Activated CD4-positive, alpha-beta T cell treated with anti-CD3 and anti-CD28 coated beads, Interleukin-2, amount 10 ng/mL, durations not matched to agents 24 days and 14 days (primary cell): ENCODE measurements at regions of chr14 and their contacts with region 1.

Region 1: DNA sequence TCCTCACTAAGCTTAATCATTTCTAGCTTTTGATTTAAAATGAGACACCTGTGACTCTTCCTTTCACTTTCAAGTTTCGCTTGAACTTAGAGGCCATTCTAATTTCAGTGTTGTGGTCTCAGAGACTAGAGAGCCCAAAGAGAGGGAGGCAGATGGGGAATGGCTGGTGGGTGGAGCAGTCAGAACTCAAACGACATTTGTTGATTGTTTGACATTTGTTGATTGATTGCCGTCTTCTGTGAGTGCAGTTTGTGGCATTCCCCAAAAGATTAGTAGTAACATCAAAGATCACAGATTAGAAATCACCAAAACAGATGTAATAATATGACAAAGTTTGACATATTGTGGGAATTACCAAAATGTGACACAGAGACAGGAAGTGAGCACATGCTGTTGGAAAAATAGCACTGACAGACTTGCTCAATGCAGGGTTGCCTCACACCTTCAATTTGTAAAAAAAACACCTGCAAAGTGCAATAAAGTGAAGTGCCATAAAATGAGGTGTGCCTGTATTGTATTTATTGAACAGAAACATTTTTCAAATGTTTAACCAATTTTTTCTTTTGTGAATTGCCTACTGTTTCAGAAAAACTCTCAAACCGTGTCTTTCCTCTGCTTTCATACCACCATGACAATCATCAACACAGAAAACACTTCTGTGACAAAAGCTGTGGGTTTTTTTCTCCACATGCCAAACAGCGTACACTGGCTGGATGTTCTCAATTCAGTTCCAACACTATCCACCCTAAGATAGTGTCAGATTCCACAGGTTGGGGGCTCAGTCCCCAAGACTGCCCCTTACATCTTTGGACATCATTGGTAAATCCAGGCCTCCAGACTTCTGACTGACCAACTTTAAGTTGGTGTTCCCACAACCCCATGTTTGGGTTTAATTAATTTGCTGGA is 376.3 kb upstream of the RGS6 start:
- DNase-seq: peak; percentile 91
- H3K4me3 Mint-ChIP-seq: peak overlapping the region; percentile 59
- H3K27ac Mint-ChIP-seq: peak overlapping the region; percentile 92
- H3K4me1 Mint-ChIP-seq: peaks cover 61% of the 10 kb centered on the region
- H3K27me3 Mint-ChIP-seq: no peaks in the 10 kb centered on the region

Region 2: GRCh38 chr14:71138448-71139293 is 417.2 kb before region 1 on chr14:
- intact Hi-C with region 1: loop called (anchors 1 kb)
- DNase-seq: peak; percentile 89
- H3K4me3 Mint-ChIP-seq: no peak overlapping the region
- H3K27ac Mint-ChIP-seq: no peak overlapping the region
- H3K4me1 Mint-ChIP-seq: peaks cover 39% of the 10 kb centered on the region
- H3K27me3 Mint-ChIP-seq: no peaks in the 10 kb centered on the region

Region 3: GRCh38 chr14:71290960-71291466 is 264.9 kb before region 1 on chr14:
- intact Hi-C with region 1: loop called (anchors 1 kb)
- DNase-seq: peak; percentile 73
- H3K4me3 Mint-ChIP-seq: no peak overlapping the region
- H3K27ac Mint-ChIP-seq: peak overlapping the region; percentile 87
- H3K4me1 Mint-ChIP-seq: peaks cover 18% of the 10 kb centered on the region
- H3K27me3 Mint-ChIP-seq: no peaks in the 10 kb centered on the region

Region 4: DNA sequence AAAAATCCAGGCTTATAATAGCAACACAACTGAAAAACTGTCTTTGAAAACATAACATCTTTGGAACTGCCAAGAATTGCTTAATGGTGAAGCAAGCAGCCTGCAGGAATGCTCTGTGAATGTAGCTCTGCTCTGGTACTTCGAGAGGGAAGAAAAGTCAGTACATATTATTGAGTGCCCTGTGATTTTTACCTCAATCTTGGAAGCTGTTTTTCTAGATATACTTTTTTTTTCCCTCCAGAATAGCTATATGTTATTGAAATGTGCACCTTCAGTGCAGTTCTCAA is 140.6 kb before region 1 on chr14:
- intact Hi-C with region 1: loop called (anchors 1 kb)
- DNase-seq: no peak
- H3K4me3 Mint-ChIP-seq: no peak overlapping the region
- H3K27ac Mint-ChIP-seq: no peak overlapping the region
- H3K4me1 Mint-ChIP-seq: peaks cover 25% of the 10 kb centered on the region
- H3K27me3 Mint-ChIP-seq: no peaks in the 10 kb centered on the region

Region 5: DNA sequence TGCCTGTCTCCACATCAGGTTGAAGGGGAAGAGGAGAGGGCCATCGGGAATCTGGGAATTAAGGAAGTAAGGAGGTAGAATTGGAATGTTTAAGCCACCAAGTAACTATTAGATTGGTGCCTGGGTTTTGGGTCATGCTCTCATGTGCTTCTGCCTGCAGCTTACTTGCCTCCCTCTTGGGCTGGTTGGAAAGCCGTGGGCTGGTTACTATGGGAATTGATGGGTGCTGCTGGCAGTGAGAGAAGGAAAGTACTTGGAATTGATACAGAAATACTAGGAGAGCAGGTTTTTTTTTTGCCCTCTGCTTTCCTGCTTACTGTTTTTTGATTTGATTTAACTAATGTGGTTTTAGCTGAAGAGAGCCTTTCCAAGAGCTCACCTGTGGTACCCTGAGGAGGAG is 117.2 kb before region 1 on chr14:
- intact Hi-C with region 1: no loop called
- DNase-seq: peak; percentile 30
- H3K4me3 Mint-ChIP-seq: no peak overlapping the region
- H3K27ac Mint-ChIP-seq: no peak overlapping the region
- H3K4me1 Mint-ChIP-seq: peaks cover 17% of the 10 kb centered on the region
- H3K27me3 Mint-ChIP-seq: no peaks in the 10 kb centered on the region

Region 6: GRCh38 chr14:71523630-71524319 is 32.1 kb before region 1 on chr14:
- intact Hi-C with region 1: loop called (anchors 2 kb)
- DNase-seq: no peak
- H3K4me3 Mint-ChIP-seq: no peak overlapping the region
- H3K27ac Mint-ChIP-seq: no peak overlapping the region
- H3K4me1 Mint-ChIP-seq: peaks cover 20% of the 10 kb centered on the region
- H3K27me3 Mint-ChIP-seq: no peaks in the 10 kb centered on the region